Gastrocnemius medialis (tissue), 4 donors: ENCODE measurements at regions of chr15 and their contacts with region 1.

Region 1: GRCh38 chr15:33547876-33548275 is 237.1 kb downstream of the RYR3 start:
- DNase-seq: peak in 1 of 2 donors; percentile 17
- ATAC-seq: peak; percentile 53 to 54
- H3K4me3 ChIP-seq: no peak overlapping the region
- H3K27ac ChIP-seq: no peak overlapping the region
- H3K4me1 ChIP-seq: peaks cover 0 to 6% of the 10 kb centered on the region in 2 donors
- H3K27me3 ChIP-seq: no peaks in the 10 kb centered on the region
- CTCF ChIP-seq: no peak
- POLR2A ChIP-seq: no peak

Region 2: GRCh38 chr15:33142708-33143107 is 405.2 kb before region 1 on chr15:
- in situ Hi-C with region 1: no loop called
- intact Hi-C with region 1: no loop called
- DNase-seq: no peak
- ATAC-seq: no peak
- H3K4me3 ChIP-seq: no peak overlapping the region
- H3K27ac ChIP-seq: no peak overlapping the region
- H3K4me1 ChIP-seq: peaks cover 2 to 6% of the 10 kb centered on the region in 2 donors
- H3K27me3 ChIP-seq: no peaks in the 10 kb centered on the region
- CTCF ChIP-seq: no peak
- POLR2A ChIP-seq: no peak

Region 3: DNA sequence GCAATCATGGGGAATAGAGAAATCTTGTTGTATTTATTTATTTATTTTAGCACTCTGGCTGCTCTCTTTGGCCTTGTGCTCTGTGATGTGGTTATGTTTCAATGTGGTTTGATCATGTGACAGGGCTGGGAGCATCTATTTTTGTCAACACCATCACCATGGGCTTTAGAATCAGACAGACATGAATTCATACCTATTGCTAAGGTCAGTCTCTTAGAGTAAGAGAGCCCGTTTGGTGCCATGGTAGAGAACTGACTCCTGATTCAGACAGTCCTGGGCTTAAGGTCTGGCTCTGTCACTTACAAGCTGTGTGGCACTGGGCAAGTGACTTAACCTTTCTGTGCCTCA is 80.1 kb before region 1 on chr15:
- in situ Hi-C with region 1: no loop called
- intact Hi-C with region 1: no loop called
- DNase-seq: peak; percentile 23 to 69
- ATAC-seq: peak; percentile 87 to 92
- H3K4me3 ChIP-seq: peak overlapping the region in 1 of 4 donors; percentile 11
- H3K27ac ChIP-seq: peak overlapping the region; percentile 80 to 85 (median 82)
- H3K4me1 ChIP-seq: peaks cover 11 to 16% of the 10 kb centered on the region in 2 donors
- H3K27me3 ChIP-seq: no peaks in the 10 kb centered on the region
- CTCF ChIP-seq: no peak
- POLR2A ChIP-seq: no peak

Region 4: DNA sequence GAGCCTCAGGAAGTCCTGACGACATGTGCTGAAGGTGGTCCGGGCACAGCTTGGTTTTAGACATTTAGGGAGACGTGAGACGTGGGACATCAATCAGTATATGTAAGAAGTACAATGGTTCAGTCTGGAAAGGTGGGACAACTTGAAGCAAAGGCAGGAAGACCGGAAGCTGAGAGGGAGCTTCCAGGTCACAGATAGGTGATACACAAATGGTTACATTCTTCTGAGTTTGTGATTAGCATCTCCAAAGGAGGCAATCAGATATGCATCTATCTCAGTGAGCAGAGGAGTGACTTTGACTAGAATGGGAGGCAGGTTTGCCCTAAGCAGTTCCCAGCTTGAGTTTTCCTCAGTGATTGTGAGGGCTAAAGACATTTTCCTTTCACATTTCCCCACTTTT is 45.0 kb after region 1 on chr15:
- in situ Hi-C with region 1: loop called in 1 of 4 experiments (anchors 10 kb)
- intact Hi-C with region 1: no loop called
- DNase-seq: no peak
- ATAC-seq: no peak
- H3K4me3 ChIP-seq: no peak overlapping the region
- H3K27ac ChIP-seq: no peak overlapping the region
- H3K4me1 ChIP-seq: no peaks in the 10 kb centered on the region
- H3K27me3 ChIP-seq: no peaks in the 10 kb centered on the region
- CTCF ChIP-seq: no peak
- POLR2A ChIP-seq: no peak